Activated B cell treated with CpG ODN at 0.5 μM for 24 hours (primary cell): ENCODE measurements at regions of chr1 and their contacts with region 1.

Region 1: DNA sequence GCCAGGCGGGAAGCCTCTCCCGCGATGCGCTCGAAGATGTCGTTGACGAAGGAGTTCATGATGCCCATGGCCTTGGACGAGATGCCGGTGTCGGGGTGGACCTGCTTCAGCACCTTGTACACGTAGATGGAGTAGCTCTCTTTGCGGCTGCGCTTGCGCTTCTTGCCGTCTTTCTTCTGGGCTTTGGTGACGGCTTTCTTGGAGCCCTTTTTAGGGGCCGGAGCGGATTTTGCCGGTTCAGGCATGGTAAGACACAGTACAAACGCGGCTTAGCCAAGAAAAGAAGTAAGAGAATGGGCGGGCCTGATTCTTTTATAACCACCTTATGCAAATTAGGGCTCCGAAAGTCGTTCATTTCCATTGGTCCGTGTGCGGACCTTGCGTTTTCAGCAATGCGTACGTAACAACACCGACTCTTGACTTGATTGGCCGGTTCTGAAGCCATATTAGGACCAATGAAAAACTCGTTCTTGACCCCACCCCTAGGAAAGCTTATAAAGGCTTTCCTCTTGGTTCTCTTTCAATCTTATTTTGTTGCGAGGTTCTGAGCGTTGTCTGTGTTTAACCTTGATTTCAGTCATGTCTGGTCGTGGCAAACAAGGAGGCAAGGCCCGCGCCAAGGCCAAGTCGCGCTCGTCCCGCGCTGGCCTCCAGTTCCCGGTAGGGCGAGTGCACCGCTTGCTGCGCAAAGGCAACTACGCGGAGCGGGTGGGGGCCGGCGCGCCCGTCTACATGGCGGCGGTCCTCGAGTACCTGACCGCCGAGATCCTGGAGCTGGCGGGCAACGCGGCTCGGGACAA is 12.8 kb upstream of the BOLA1 start:
- DNase-seq: peak; percentile 74
- ATAC-seq: peak; percentile 69
- H3K4me3 Mint-ChIP-seq: no peak overlapping the region
- H3K27ac Mint-ChIP-seq: no peak overlapping the region
- H3K4me1 Mint-ChIP-seq: peaks cover 2% of the 10 kb centered on the region
- H3K27me3 Mint-ChIP-seq: no peaks in the 10 kb centered on the region
- CTCF ChIP-seq: no peak

Region 2: DNA sequence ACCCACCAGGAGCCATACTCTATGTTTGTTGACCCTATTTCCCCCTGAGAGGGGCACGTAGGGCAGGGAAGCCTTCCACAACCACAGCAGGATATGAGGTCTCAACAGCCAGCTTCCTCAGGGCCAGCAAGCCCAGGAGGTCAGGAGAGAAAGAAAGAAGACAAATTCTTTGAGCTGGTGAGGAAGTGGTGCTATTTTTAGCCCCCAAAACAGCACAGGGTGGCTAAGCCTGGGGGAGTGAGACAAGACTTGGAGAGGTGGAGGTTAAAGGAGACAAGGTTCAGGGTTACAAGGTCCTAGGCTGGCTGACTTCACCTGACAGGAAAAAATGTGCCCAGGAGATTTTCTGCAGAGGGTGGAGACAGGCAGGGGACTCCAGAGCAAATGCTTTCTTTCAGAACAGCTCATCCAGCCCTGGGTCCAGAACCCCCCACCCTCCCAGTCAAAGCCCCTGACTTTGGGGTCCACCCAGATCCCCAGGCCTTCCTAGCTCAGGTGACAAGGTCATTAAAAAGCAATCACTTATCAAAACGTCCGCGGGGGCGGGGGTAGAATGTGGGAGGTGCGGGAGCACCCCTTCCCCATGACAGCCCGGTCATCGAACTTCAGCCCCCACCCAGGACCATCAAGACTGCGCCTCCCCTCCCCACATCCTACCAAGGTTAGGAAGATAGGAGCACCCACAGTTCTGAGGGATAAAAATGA is 29.7 kb after region 1 on chr1:
- CTCF ChIA-PET with region 1: no interaction called
- POLR2A ChIA-PET with region 1: interaction called, 17 read pairs
- intact Hi-C with region 1: no loop called
- DNase-seq: no peak
- ATAC-seq: no peak
- H3K4me3 Mint-ChIP-seq: no peak overlapping the region
- H3K27ac Mint-ChIP-seq: no peak overlapping the region
- H3K4me1 Mint-ChIP-seq: peaks cover 23% of the 10 kb centered on the region
- H3K27me3 Mint-ChIP-seq: peaks cover 26% of the 10 kb centered on the region
- CTCF ChIP-seq: no peak

Region 3: GRCh38 chr1:149997585-149998262 is 111.1 kb after region 1 on chr1:
- CTCF ChIA-PET with region 1: no interaction called
- POLR2A ChIA-PET with region 1: interaction called, 16 read pairs
- intact Hi-C with region 1: loop called (anchors 1 kb)
- DNase-seq: no peak
- ATAC-seq: peak; percentile 86
- H3K4me3 Mint-ChIP-seq: peak overlapping the region; percentile 48
- H3K27ac Mint-ChIP-seq: peak overlapping the region; percentile 47
- H3K4me1 Mint-ChIP-seq: peaks cover 39% of the 10 kb centered on the region
- H3K27me3 Mint-ChIP-seq: peaks cover 38% of the 10 kb centered on the region
- CTCF ChIP-seq: no peak

Region 4: DNA sequence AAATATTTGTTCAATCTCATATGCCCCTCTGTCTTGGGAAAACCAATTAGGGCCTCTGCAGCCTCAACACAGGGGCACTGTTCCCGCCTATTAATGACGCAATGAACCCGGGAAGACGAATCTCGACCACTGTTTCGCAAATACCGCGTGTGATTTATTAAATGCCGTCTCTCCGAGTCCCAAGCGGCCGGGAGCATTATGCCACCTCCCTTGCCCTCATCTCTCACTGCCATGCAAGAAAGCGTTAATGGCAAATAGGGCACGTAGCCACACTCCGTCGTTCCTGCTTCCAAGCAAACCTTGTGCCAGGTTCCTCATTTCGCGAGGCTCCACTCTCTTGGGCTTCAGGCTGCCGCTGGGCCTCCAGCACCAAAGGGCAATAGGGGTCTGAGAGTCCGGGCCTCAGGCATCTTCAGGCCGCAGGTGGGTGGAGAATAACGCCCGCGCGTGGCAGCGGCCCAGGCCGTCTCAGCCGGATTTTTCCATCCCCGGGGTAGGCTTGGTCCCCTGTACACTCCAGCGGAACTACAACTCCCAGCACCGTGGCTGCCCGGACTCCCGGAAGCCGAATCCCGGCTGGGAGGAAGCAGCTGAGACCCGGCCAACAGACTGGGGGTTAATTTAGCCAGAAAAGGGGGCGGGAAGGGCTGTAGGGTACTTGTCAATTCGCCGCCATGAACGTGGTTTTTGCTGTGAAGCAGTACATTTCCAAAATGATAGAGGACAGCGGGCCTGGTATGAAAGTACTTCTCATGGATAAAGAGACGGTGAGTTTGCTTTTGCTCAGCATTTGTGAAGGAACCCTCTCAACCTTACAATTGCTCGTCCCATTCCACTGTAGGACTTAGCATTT is 180.8 kb after region 1 on chr1 and contains the start of gene VPS45:
- CTCF ChIA-PET with region 1: interaction called, 3 read pairs
- POLR2A ChIA-PET with region 1: interaction called, 37 read pairs
- intact Hi-C with region 1: loop called (anchors 1 kb)
- DNase-seq: peak; percentile 71
- ATAC-seq: peak; percentile 86
- H3K4me3 Mint-ChIP-seq: peak within 1 kb of the TSS; percentile 95
- H3K27ac Mint-ChIP-seq: peak within 1 kb of the TSS; percentile 95
- H3K4me1 Mint-ChIP-seq: peaks cover 31% of the 10 kb centered on the region
- H3K27me3 Mint-ChIP-seq: no peaks in the 10 kb centered on the region
- CTCF ChIP-seq: no peak
- total RNA-seq, gene VPS45: 39.0 and 46.0 TPM in 2 replicates

Region 5: GRCh38 chr1:150186789-150187559 is 300.4 kb after region 1 on chr1:
- CTCF ChIA-PET with region 1: interaction called, 10 read pairs
- POLR2A ChIA-PET with region 1: interaction called, 78 read pairs
- intact Hi-C with region 1: loop called (anchors 1 kb)
- DNase-seq: peak; percentile 46
- ATAC-seq: peak; percentile 81
- H3K4me3 Mint-ChIP-seq: peak overlapping the region; percentile 73
- H3K27ac Mint-ChIP-seq: peak overlapping the region; percentile 89
- H3K4me1 Mint-ChIP-seq: peaks cover 13% of the 10 kb centered on the region
- H3K27me3 Mint-ChIP-seq: no peaks in the 10 kb centered on the region
- CTCF ChIP-seq: no peak